HEK293 (cell line): ENCODE measurements at regions of chr6 and their contacts with region 1.

Region 1: DNA sequence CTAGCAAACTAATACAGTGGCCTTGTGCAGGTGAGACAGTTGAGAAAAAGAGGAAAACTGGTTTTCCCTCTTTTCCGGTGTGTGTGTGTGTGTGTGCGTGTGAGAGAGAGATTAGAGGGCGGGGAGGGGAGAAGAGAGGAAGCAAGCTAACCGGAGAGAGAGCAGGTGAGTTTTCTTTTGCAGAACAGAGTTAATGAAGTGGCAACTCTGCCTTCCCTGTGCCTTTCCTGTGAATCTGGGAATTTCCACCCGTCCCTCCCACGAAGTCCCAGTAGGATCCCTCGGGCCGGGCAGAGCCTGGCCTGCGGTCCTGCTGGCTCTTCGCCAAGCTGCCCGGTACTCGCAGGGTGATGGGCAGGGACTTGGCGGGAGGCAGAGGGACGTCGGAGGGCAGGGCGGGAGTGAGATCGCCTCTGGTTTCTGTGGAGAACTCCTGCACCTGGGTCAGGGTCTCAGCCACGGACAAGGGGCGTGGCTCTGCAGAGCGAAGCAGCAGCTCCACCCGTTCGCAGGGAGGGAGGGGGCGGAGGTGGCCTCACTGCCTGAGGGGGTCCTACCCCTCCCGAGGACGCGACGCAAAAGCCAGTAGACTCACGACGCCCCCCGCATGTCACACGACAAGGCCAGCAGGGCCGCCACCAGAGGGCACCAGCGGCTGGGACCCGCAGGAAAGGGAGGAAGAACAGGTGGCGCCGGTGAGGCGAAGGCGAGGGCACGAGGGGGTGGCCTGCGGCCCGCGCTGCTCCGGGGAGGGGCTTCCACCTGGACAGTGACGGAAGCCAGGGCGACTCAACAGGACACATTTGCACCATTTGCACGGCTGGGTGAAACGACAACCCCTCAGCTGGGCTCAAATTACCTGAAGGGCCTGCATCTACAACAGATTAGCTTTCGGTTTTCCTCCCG is 51.2 kb upstream of the RNF182 start:
- H3K4me3 ChIP-seq: peak overlapping the region; percentile 25
- H3K27ac ChIP-seq: no peak overlapping the region; the same call in 1 of the 2 replicates
- H3K4me1 ChIP-seq: no peaks in the 10 kb centered on the region
- CTCF ChIP-seq: peak; percentile 99

Region 2: DNA sequence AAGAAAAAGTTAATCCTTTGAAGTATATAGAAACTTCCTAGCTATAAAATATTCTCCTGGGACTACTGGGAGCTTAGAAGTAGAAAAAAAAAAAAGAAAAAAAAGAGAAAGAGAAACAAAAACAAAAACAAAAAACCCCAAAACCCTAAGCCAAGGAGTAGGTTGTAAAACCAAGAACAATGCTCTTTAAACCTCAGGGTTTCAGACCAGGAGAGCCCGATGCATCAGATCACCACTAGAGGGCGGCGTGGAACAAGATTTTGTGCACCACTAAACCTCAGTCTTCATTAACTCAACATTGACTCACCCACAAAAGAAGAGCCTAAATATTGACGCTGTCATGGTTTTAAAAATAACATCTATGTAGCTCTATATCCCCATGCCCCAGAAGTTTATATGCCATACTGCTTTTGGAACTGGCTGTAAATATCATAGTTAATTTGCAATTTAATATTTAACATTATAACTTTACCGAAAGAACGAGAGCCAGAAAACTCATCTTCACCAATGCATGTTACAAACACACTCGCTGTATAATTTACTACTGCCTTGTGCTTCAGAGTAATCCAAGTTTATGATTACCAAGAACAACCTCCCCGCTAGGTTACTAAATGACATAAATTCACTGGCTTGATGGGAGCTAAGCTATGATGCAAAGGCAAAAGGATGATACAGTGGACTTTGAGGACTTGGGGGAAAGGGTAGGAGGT is 78.3 kb before region 1 on chr6:
- CTCF ChIA-PET with region 1: interaction called, 16 read pairs
- POLR2A ChIA-PET with region 1: no interaction called
- H3K4me3 ChIP-seq: no peak overlapping the region
- H3K27ac ChIP-seq: no peak overlapping the region
- H3K4me1 ChIP-seq: peaks cover 4% of the 10 kb centered on the region; the same call in 1 of the 2 replicates
- CTCF ChIP-seq: peak; percentile 64; the same call in 1 of the 2 replicates

Region 3: DNA sequence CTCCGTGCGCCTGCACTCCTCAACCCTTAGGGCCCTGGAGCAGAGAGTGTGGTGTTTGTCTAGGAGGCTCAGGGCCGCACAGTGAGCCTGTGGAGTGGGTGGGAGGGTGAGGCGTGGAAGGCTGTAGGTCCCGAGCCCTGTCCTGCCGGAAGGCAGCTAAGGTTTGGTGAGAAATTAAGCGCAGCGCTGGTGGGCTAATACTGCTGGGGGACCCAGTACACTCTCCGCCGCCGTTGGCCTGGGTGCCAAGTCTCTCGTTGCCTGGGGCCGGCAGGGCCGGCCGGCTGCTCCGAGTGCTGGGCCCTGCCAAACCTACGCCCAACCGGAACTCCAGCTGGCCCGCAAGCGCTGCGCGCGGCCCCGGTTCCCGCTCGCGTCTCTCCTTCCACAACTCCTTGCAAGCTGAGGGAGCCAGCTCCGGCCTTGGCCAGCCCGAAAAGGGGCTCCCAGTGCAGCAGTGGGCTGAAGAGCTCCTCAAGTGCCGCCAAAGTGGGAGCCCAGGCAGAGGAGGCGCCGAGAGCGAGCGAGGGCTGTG is 18.8 kb before region 1 on chr6:
- CTCF ChIA-PET with region 1: interaction called, 14 read pairs
- POLR2A ChIA-PET with region 1: no interaction called
- H3K4me3 ChIP-seq: no peak overlapping the region
- H3K27ac ChIP-seq: no peak overlapping the region
- H3K4me1 ChIP-seq: no peaks in the 10 kb centered on the region
- CTCF ChIP-seq: no peak

Region 4: DNA sequence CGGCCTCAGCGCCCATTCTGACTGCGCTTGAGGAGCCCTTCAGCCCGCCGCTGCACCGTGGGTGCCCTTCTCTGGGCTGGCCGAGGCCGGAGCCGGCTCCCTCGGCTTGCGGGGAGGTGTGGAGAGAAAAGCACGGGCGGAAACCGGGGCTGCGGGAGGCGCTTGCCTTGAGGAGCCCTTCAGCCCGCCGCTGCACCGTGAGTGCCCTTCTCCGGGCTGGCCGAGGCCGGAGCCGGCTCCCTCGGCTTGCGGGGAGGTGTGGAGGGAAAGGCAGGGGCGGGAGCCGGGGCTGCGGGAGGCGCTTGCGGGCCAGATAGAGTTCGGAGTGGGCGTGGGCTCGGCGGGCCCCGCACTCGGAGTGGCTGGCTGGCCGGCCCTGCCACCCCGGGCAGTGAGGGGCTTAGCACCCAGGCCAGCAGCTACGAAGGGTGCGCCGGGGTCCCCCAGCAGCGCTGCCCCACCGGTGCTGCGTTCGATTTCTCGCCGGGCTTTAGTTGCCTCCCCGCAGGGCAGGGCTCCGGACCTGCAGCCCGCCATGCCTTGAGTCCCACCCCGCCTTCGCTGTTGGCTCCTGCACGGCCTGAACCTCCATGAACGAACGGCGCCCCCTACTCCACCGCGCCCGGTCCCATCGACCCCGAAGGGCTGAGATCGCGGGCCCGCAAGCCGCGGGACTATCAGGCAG is 13.5 kb before region 1 on chr6:
- CTCF ChIA-PET with region 1: interaction called, 10 read pairs
- POLR2A ChIA-PET with region 1: no interaction called
- H3K4me3 ChIP-seq: no peak overlapping the region
- H3K27ac ChIP-seq: no peak overlapping the region
- H3K4me1 ChIP-seq: 0 out of 2 replicates have a peak, but pooled peaks cover 2% of the 10 kb centered on the region
- CTCF ChIP-seq: no peak

Region 5: GRCh38 chr6:13884397-13884796 is 10.9 kb after region 1 on chr6:
- CTCF ChIA-PET with region 1: interaction called, 25 read pairs
- POLR2A ChIA-PET with region 1: no interaction called
- H3K4me3 ChIP-seq: no peak overlapping the region
- H3K27ac ChIP-seq: no peak overlapping the region
- H3K4me1 ChIP-seq: no peaks in the 10 kb centered on the region
- CTCF ChIP-seq: no peak

Region 6: GRCh38 chr6:14059791-14060444 is 186.4 kb after region 1 on chr6:
- CTCF ChIA-PET with region 1: interaction called, 10 read pairs
- POLR2A ChIA-PET with region 1: no interaction called
- H3K4me3 ChIP-seq: no peak overlapping the region
- H3K27ac ChIP-seq: no peak overlapping the region
- H3K4me1 ChIP-seq: no peaks in the 10 kb centered on the region
- CTCF ChIP-seq: no peak